Dendritic cell treated with granulocyte-macrophage colony-stimulating factor and Interleukin-4, amounts not matched to agents 40 ng/mL and 50 ng/mL, for 4 days (primary cell): ENCODE measurements at regions of chr6 and their contacts with region 1.

Region 1: DNA sequence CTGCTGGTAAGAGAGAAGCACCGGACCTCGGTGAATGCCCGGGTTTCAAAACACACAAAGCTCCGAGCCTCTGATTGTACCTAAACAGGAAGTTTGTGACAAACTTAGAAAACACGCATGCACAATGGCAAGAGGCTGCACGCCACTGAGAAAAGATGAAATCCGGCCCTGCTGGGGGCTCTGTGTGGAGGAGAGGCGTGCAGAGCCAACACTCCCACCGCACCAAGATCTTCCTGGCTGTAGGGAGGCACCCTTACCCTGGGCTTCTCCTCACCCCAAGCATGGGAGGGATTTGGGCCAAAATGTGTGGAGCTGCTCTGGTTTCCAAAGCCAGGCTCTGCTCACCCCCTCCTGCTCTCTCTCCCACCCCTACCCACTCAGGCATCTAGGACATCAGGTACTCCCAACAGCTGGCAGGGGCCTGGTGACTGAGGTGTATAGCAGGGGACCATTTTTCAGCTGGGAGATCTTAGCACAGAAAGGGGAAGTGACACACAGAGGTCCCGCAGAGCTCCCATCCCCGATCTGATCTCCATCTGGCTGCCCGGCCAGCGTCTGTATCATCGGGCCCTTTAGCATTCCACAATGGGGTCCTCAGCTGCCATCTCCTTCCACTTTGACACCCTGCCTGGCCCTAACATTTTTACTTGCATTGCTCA is 84.2 kb downstream of the TRERF1 start:
- H3K4me3 Mint-ChIP-seq: peak overlapping the region; percentile 51
- H3K27ac Mint-ChIP-seq: peak overlapping the region; percentile 79
- H3K4me1 Mint-ChIP-seq: peaks cover 95% of the 10 kb centered on the region
- H3K27me3 Mint-ChIP-seq: no peaks in the 10 kb centered on the region

Region 2: GRCh38 chr6:42315991-42316378 is 51.5 kb before region 1 on chr6:
- intact Hi-C with region 1: loop called (anchors 5 kb)
- H3K4me3 Mint-ChIP-seq: no peak overlapping the region
- H3K27ac Mint-ChIP-seq: peak overlapping the region; percentile 92
- H3K4me1 Mint-ChIP-seq: peaks cover 81% of the 10 kb centered on the region
- H3K27me3 Mint-ChIP-seq: no peaks in the 10 kb centered on the region

Region 3: GRCh38 chr6:42407379-42407778 is 39.9 kb after region 1 on chr6:
- intact Hi-C with region 1: loop called (anchors 5 kb)
- H3K4me3 Mint-ChIP-seq: peak overlapping the region; percentile 58
- H3K27ac Mint-ChIP-seq: peak overlapping the region; percentile 87
- H3K4me1 Mint-ChIP-seq: peaks cover 80% of the 10 kb centered on the region
- H3K27me3 Mint-ChIP-seq: no peaks in the 10 kb centered on the region

Region 4: DNA sequence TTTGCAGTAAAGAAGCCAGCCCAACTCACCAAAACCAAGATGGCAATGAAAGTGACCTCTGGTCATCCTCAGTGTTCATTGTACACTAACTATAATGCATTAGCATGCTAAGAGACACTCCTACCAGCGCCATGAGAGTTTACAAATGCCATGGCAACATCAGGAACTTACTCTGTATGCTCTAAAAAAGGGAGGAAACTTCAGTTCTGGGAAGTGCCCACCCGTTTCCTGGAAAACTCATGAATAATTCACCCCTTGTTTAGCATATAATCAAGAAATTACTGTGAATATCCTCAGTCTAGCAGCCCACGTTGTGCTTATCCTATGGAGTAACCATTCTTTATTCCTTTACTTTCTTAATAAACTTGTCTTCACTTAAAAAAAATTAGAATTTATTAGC is 103.7 kb after region 1 on chr6:
- intact Hi-C with region 1: no loop called
- H3K4me3 Mint-ChIP-seq: no peak overlapping the region
- H3K27ac Mint-ChIP-seq: no peak overlapping the region
- H3K4me1 Mint-ChIP-seq: no peaks in the 10 kb centered on the region
- H3K27me3 Mint-ChIP-seq: peaks cover 7% of the 10 kb centered on the region

Region 5: DNA sequence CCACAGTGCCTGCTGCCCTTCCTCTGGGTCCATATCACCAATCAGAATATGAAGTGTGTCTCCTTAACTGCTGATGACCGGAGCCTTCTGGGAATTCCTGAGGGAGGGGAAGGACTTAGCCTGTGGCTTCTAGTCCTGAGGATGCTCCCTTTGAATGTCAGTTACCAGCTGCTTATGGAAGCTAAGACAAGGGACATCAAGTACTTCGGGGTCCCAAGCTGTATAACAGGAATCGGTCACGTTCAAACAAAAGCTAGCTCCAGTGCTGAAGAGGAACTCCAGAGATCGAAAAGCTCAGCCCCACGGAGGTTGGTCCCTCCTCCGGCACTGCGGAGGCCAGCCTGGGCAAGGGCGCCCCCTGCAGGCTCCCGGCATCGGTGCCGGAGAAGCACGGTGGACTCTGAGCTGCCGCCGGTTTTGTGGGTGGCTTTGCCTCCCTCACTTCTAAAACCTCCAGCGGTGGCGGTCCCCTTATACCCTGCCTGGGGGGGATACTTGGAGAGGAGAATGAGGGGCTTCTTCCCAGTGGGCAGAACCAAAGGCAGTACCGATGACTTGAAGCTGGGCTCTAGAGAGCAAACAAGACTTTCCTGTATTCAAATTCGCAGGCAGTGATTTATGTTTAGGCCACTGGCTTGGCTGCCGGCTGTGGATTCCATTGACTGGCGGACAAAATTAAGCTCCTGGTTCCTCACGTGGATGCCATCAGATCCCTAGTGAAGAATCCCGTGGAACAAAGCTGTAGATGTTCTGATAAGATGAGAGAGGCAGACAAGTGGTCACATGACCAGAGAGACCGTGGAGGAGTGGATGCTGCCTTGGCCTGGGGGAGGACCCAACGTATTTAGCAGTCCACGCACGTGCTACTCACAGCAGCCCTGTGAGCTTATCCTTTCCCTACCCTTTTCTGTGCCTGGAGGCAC is 180.2 kb after region 1 on chr6:
- intact Hi-C with region 1: loop called (anchors 5 kb)
- H3K4me3 Mint-ChIP-seq: peak overlapping the region; percentile 74
- H3K27ac Mint-ChIP-seq: peak overlapping the region; percentile 76
- H3K4me1 Mint-ChIP-seq: peaks cover 14% of the 10 kb centered on the region
- H3K27me3 Mint-ChIP-seq: peaks cover 8% of the 10 kb centered on the region